CD8-positive, alpha-beta T cell (primary cell): ENCODE measurements at regions of chr15 and their contacts with region 1.

Region 1: GRCh38 chr15:41180206-41180789 is 50.3 kb downstream of the EXD1 start:
- DNase-seq: no peak
- ATAC-seq: no peak
- H3K4me3 ChIP-seq: no peak overlapping the region
- H3K4me3 Mint-ChIP-seq: no peak overlapping the region
- H3K27ac ChIP-seq: no peak overlapping the region
- H3K27ac Mint-ChIP-seq: no peak overlapping the region
- H3K4me1 ChIP-seq: no peaks in the 10 kb centered on the region
- H3K4me1 Mint-ChIP-seq: no peaks in the 10 kb centered on the region
- H3K27me3 ChIP-seq: no peaks in the 10 kb centered on the region
- H3K27me3 Mint-ChIP-seq: peaks cover 3% of the 10 kb centered on the region
- CTCF ChIP-seq: no peak

Region 2: DNA sequence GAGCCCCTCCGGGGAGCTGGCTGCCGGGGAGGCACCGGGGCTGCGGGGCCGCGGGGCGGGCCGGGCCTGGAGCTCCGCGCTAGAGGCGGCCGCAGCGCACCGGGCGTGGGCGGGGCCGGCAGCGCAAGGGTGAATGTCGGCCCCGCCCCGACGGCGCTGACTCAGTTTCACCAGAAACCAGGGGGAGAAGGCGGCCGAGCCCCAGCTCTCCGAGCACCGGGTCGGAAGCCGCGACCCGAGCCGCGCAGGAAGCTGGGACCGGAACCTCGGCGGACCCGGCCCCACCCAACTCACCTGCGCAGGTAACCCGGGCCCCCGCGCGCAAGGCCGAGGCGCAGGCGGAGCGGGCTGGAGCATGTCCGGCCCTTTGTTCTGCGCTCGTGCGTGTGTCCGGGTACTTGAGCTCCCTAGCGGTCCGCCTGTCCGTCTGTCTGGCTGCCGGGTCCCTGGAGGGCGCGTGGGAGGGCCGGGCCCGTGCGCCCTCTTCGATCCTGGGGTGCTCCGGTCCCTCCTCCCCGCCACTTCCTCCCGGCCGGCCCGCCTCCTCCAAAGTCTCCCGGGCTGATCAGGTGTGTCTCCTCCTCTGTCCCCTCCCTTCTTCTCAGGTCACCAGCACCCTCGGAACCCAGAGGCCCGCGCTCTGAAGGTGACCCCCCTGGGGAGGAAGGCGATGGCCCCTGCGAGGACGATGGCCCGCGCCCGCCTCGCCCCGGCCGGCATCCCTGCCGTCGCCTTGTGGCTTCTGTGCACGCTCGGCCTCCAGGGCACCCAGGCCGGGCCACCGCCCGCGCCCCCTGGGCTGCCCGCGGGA is 336.2 kb before region 1 on chr15 and contains the start of gene SPINT1:
- CTCF ChIA-PET with region 1: no interaction called
- POLR2A ChIA-PET with region 1: no interaction called
- intact Hi-C with region 1: no loop called
- DNase-seq: peak in 4 of 9 experiments; percentile 13 to 58 (median 34)
- ATAC-seq: peak; percentile 50
- H3K4me3 ChIP-seq: peak within 1 kb of the TSS; percentile 52 to 58
- H3K4me3 Mint-ChIP-seq: peak within 1 kb of the TSS; percentile 80
- H3K27ac ChIP-seq: no peak within 1 kb of the TSS
- H3K27ac Mint-ChIP-seq: no peak within 1 kb of the TSS
- H3K4me1 ChIP-seq: peaks cover 8% of the 10 kb centered on the region
- H3K4me1 Mint-ChIP-seq: peaks cover 11% of the 10 kb centered on the region
- H3K27me3 ChIP-seq: peaks cover 0 to 4% of the 10 kb centered on the region in 2 experiments
- H3K27me3 Mint-ChIP-seq: peaks cover 20% of the 10 kb centered on the region
- CTCF ChIP-seq: no peak
- total RNA-seq, gene SPINT1: 0.14 to 0.54 TPM

Region 3: DNA sequence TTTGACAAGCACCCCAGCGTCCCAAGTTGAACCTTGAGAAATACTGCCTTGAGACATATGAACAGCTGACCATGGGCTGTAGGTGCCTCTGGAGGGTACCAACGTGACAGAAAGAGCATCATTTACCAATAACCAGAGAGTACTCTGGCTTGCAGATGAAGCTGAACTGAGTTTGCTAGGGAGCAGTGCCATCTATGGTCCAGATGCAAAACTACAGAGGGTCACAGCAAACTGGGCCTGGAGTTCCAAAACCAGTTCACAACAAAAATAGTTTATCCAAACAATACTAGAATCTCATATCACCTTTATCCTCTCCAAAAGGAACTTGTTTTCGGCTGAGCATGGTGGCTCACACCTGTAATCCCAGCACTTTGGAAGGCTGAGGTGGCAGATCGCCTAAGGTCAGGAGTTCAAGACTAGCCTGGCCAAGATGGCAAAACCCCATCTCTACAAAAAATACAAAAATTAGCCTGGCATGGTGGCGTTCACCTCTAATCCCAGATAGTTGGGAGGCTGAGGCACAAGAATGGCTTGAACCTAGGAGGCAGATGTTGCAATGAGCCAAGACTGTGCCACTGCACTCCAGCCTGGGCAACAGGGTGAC is 157.7 kb before region 1 on chr15:
- CTCF ChIA-PET with region 1: interaction called, 4 read pairs
- POLR2A ChIA-PET with region 1: no interaction called
- intact Hi-C with region 1: loop called in 1 of 2 experiments (anchors 5 kb)
- DNase-seq: peak; percentile 1 to 65 (median 32)
- ATAC-seq: peak; percentile 72
- H3K4me3 ChIP-seq: no peak overlapping the region
- H3K4me3 Mint-ChIP-seq: no peak overlapping the region
- H3K27ac ChIP-seq: no peak overlapping the region
- H3K27ac Mint-ChIP-seq: no peak overlapping the region
- H3K4me1 ChIP-seq: no peaks in the 10 kb centered on the region
- H3K4me1 Mint-ChIP-seq: peaks cover 1% of the 10 kb centered on the region
- H3K27me3 ChIP-seq: no peaks in the 10 kb centered on the region
- H3K27me3 Mint-ChIP-seq: no peaks in the 10 kb centered on the region
- CTCF ChIP-seq: peak; percentile 66

Region 4: DNA sequence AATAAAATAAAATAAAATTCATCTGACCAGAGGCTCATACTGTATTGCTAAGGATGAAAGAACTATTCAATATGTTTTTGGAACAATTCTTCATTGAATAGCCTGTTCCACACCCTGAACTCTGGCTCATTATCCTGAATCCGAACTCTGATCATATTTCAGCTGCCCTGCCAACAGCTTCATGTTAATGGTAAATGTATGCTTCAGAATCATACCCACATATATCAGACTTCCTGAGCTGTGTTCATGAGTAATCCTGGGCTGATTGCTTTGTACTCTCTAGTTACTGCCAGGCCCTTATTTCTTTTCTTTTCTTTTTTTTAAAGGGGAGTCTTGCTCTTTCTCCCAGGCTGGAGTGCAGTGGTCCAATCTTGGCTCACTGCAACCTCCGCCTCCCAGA is 76.1 kb before region 1 on chr15:
- CTCF ChIA-PET with region 1: no interaction called
- POLR2A ChIA-PET with region 1: no interaction called
- intact Hi-C with region 1: loop called in 1 of 2 experiments (anchors 5 kb)
- DNase-seq: no peak
- ATAC-seq: no peak
- H3K4me3 ChIP-seq: no peak overlapping the region
- H3K4me3 Mint-ChIP-seq: no peak overlapping the region
- H3K27ac ChIP-seq: no peak overlapping the region
- H3K27ac Mint-ChIP-seq: no peak overlapping the region
- H3K4me1 ChIP-seq: no peaks in the 10 kb centered on the region
- H3K4me1 Mint-ChIP-seq: peaks cover 44% of the 10 kb centered on the region
- H3K27me3 ChIP-seq: no peaks in the 10 kb centered on the region
- H3K27me3 Mint-ChIP-seq: no peaks in the 10 kb centered on the region
- CTCF ChIP-seq: no peak

Region 5: DNA sequence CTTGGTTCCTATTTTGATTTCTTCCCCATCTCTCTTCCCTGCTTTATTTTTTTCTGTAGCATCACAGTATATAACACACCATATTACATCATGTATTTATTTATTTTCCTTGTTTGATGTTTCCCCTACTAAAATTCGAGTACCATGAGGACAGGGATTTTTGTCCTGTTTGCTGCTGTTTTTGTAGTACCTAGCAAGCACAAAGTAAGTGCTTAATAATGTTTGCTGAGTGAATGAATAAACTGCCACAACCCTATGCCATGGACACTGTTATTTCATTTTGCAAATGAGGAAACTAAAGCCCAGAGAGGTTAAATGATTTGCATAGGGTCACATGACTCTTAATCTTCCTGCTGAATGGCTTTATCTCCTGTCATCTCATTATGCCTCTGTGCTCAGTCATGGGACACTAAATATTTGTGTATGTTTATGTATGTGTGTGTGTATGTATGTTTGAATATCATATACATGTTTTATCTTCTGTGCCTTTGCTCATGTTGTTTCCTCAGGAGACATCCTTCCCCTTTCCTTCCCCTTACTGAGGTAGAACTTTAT is 453.9 kb after region 1 on chr15:
- CTCF ChIA-PET with region 1: no interaction called
- POLR2A ChIA-PET with region 1: no interaction called
- intact Hi-C with region 1: no loop called
- DNase-seq: no peak
- ATAC-seq: no peak
- H3K4me3 ChIP-seq: no peak overlapping the region
- H3K4me3 Mint-ChIP-seq: no peak overlapping the region
- H3K27ac ChIP-seq: no peak overlapping the region
- H3K27ac Mint-ChIP-seq: no peak overlapping the region
- H3K4me1 ChIP-seq: no peaks in the 10 kb centered on the region
- H3K4me1 Mint-ChIP-seq: peaks cover 4% of the 10 kb centered on the region
- H3K27me3 ChIP-seq: no peaks in the 10 kb centered on the region
- H3K27me3 Mint-ChIP-seq: no peaks in the 10 kb centered on the region
- CTCF ChIP-seq: no peak